SK-N-SH (cell line): ENCODE measurements at regions of chr20 and their contacts with region 1.

Region 1: DNA sequence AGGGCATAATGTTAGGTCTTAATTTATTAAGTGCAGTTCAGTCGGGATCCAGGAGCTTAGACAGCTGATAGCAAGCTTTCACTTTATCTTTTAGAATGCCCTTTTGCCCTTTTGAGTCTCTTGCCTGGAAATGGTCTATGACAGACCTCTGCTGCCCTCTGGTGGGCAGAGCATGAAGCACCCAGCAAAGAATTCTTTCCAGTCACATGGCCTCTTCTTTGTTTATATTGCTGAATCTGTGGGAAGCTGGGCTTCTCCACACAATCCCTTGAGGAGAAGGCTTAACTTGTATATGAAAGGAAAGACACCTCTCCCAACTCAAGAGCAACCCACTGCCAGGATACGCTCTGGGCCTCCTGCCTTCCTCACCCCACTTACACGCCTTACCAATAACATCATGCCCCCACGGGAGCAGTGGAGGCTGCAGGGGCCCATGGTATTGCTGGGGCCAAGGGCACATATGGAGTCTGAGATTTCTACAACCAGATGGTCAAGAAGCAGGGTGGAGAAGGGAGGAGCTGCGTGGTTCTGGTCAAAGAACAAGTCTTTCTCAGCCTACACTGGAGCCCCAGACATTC is 20.4 kb downstream of the WFDC3 start:
- DNase-seq: peak; percentile 70
- H3K4me3 ChIP-seq: peak overlapping the region in 1 of 2 experiments; percentile 38; a peak in 1 of 4 replicates
- H3K27ac ChIP-seq: no peak overlapping the region
- H3K4me1 ChIP-seq: peaks cover 0 to 3% of the 10 kb centered on the region in 2 experiments; a peak in 2 of 4 replicates
- H3K27me3 ChIP-seq: no peaks in the 10 kb centered on the region
- CTCF ChIP-seq: peak; percentile 97
- EP300 ChIP-seq: no peak
- RAD21 ChIP-seq: peak; percentile 95

Region 2: GRCh38 chr20:45341939-45342859 is 429.1 kb before region 1 on chr20:
- CTCF ChIA-PET with region 1: interaction called, 14 read pairs
- POLR2A ChIA-PET with region 1: no interaction called
- DNase-seq: peak; percentile 79
- H3K4me3 ChIP-seq: peak overlapping the region; percentile 27 to 31
- H3K27ac ChIP-seq: peak overlapping the region; percentile 90 to 96
- H3K4me1 ChIP-seq: peaks cover 72 to 74% of the 10 kb centered on the region in 2 experiments
- H3K27me3 ChIP-seq: no peaks in the 10 kb centered on the region
- CTCF ChIP-seq: no peak
- EP300 ChIP-seq: peak in 1 of 2 experiments; percentile 45; a peak in 1 of 4 replicates
- RAD21 ChIP-seq: no peak

Region 3: DNA sequence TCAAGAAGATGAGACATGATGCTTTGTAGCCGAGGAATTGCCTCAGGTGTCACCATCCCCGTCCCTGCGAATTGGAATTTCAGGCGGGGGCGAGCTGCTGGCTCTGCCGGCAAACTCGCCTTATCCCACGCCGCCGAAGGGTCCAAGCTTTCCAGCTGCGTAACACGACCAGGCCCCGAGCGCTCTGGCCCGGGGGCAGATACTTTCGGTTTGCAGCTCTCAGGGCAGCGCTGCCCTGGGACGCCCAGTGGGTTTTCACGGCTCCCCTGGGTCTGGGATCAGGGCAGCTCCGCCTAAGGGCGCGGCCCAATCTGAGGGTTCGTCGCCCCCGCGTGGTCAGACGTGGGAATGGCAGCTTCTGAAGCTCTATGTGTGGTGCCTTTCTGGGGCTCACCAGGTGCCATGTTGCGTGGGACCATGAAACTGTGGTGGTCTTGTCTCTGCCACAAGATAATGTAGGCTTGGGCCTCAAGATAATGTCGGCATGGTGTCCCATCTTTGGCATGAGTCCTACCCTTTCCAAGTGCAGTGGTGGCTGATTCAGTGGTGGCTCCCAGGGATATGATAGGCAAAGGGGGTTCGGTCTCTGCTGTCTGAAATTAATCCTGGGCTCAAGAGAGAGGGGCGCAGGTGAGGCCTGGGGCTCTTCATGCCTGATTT is 334.4 kb before region 1 on chr20:
- CTCF ChIA-PET with region 1: interaction called, 34 read pairs
- POLR2A ChIA-PET with region 1: no interaction called
- DNase-seq: peak; percentile 87
- H3K4me3 ChIP-seq: peak overlapping the region; percentile 63 to 74
- H3K27ac ChIP-seq: peak overlapping the region; percentile 13 to 14; a peak in 2 of 4 replicates
- H3K4me1 ChIP-seq: peaks cover 0 to 3% of the 10 kb centered on the region in 2 experiments; a peak in 2 of 4 replicates
- H3K27me3 ChIP-seq: no peaks in the 10 kb centered on the region
- CTCF ChIP-seq: peak; percentile 93
- EP300 ChIP-seq: no peak
- RAD21 ChIP-seq: peak; percentile 92

Region 4: GRCh38 chr20:45579184-45579583 is 192.1 kb before region 1 on chr20 and contains the start of gene WFDC8:
- CTCF ChIA-PET with region 1: interaction called, 10 read pairs
- POLR2A ChIA-PET with region 1: no interaction called
- DNase-seq: no peak
- H3K4me3 ChIP-seq: no peak within 1 kb of the TSS
- H3K27ac ChIP-seq: no peak within 1 kb of the TSS
- H3K4me1 ChIP-seq: no peaks in the 10 kb centered on the region
- H3K27me3 ChIP-seq: peaks cover 23% of the 10 kb centered on the region; the same call in 1 of the 2 replicates
- CTCF ChIP-seq: no peak
- EP300 ChIP-seq: no peak
- RAD21 ChIP-seq: no peak
- polyA plus RNA-seq, gene WFDC8: not detected in 2 replicates

Region 5: GRCh38 chr20:45751721-45752120 is 19.6 kb before region 1 on chr20:
- CTCF ChIA-PET with region 1: interaction called, 25 read pairs
- POLR2A ChIA-PET with region 1: no interaction called
- DNase-seq: no peak
- H3K4me3 ChIP-seq: no peak overlapping the region
- H3K27ac ChIP-seq: no peak overlapping the region
- H3K4me1 ChIP-seq: no peaks in the 10 kb centered on the region
- H3K27me3 ChIP-seq: no peaks in the 10 kb centered on the region; the same call in 1 of the 2 replicates
- CTCF ChIP-seq: no peak
- EP300 ChIP-seq: no peak
- RAD21 ChIP-seq: no peak

Region 6: GRCh38 chr20:45823949-45824835 is 52.9 kb after region 1 on chr20:
- CTCF ChIA-PET with region 1: no interaction called
- POLR2A ChIA-PET with region 1: no interaction called
- DNase-seq: peak; percentile 62
- H3K4me3 ChIP-seq: no peak overlapping the region
- H3K27ac ChIP-seq: no peak overlapping the region
- H3K4me1 ChIP-seq: peaks cover 0 to 8% of the 10 kb centered on the region in 2 experiments; a peak in 2 of 4 replicates
- H3K27me3 ChIP-seq: no peaks in the 10 kb centered on the region
- CTCF ChIP-seq: no peak; the same call in 1 of the 2 replicates
- EP300 ChIP-seq: no peak
- RAD21 ChIP-seq: peak; percentile 52

Region 7: GRCh38 chr20:45872648-45873047 is 101.4 kb after region 1 on chr20:
- CTCF ChIA-PET with region 1: no interaction called
- POLR2A ChIA-PET with region 1: no interaction called
- DNase-seq: no peak
- H3K4me3 ChIP-seq: no peak overlapping the region
- H3K27ac ChIP-seq: no peak overlapping the region
- H3K4me1 ChIP-seq: peaks cover 0 to 5% of the 10 kb centered on the region in 2 experiments; a peak in 1 of 4 replicates
- H3K27me3 ChIP-seq: no peaks in the 10 kb centered on the region
- CTCF ChIP-seq: no peak
- EP300 ChIP-seq: no peak
- RAD21 ChIP-seq: no peak